ENCODE measurements at regions of chr7 and their contacts with region 1.

Region 1: GRCh38 chr7:91940572-91941341 is at the start of gene AKAP9:
- DNase-seq: peak; percentile 92
- H3K4me3 Mint-ChIP-seq: peak within 1 kb of the TSS; percentile 91
- H3K27ac Mint-ChIP-seq: peak within 1 kb of the TSS; percentile 93
- H3K4me1 Mint-ChIP-seq: peaks cover 26% of the 10 kb centered on the region
- H3K27me3 Mint-ChIP-seq: no peaks in the 10 kb centered on the region

Region 2: DNA sequence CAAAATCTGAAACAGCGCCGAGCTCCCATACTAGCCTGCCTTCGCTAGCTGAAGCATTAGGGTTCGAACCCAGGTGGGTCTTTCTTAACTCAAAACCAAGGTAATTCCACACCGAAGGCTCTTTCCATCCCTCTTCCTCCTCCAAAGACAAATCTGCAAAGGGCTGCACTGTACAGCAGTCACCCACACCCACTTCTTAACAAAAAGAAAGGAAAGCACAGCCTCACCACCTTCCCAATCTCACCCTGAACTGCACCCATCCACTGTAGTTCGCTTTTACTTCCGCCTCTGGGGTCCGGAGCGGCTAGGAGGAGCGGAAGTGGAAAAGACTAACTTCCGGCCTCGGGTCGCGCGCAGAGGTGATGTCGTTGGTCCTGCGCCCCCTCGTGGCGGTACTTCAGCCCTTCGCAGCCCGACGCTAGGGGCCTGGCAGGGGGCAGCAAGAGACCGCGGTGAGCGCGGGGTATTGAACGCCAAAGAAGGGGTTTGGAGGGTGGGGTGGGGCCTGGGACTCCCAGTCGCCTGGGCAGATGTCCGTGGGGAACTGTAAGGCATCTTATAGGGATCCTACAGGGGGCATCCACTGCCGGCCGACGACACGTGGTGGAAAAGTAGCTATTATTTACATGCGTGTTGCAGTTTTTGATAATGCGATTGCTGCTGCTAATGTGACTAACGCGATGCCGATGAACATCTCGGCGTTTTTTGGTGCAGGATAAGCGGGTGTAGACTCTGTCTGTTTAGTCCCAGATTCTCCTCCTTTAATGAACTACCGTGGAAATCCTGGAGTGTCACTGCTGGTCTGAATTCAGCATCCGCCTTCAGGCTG is 60.1 kb before region 1 on chr7 and contains the start of gene MTERF1:
- CTCF ChIA-PET with region 1: interaction called, 17 read pairs
- DNase-seq: peak; percentile 95
- H3K4me3 Mint-ChIP-seq: peak within 1 kb of the TSS; percentile 98
- H3K27ac Mint-ChIP-seq: peak within 1 kb of the TSS; percentile 94
- H3K4me1 Mint-ChIP-seq: peaks cover 41% of the 10 kb centered on the region
- H3K27me3 Mint-ChIP-seq: peaks cover 3% of the 10 kb centered on the region

Region 3: GRCh38 chr7:91953618-91954017 is 12.9 kb after region 1 on chr7:
- CTCF ChIA-PET with region 1: interaction called, 12 read pairs
- DNase-seq: no peak
- H3K4me3 Mint-ChIP-seq: no peak overlapping the region
- H3K27ac Mint-ChIP-seq: no peak overlapping the region
- H3K4me1 Mint-ChIP-seq: peaks cover 6% of the 10 kb centered on the region
- H3K27me3 Mint-ChIP-seq: no peaks in the 10 kb centered on the region